MCF 10A (cell line): ENCODE measurements at regions of chr14 and their contacts with region 1.

Region 1: DNA sequence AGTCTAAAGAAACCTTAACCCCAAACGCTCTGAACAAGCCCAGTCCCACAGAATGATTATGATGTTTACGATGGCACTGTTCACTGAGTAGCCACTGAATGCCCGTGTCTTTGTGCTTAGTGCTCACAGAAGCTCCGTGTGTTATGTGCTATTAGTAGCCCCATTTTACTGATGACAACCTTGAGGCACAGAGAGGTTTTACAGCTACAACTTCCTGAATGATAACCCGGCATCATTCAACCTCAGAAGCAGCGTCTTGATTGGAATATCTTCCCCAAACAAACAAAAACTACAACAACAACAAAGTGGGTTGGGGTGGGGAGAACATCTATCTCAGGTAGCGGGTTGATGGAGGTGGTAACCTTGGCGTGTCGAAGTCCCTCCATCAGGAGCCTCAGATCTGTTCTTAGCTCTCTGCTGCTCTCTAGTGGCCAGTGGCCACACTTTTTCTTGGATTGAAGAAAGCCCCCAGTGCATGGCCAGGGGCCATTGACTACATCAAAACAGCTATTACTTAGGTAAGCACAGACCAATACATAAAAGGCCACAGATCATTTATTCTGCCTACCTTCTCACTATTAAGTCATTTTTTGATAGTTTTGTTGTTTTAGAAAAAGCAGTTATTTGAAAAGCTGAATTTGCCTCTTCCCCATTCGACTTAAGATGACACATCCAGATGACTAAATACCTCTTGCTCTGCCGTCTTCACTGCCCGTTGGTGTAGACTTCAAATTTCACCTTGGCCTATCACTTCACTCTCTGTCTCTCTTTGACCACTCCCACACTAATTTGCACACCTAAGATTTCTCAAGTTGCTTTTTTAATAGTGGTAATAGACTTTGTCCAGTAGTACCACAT is 376.9 kb downstream of the GALC start:
- DNase-seq: peak; percentile 73
- H3K4me3 Mint-ChIP-seq: no peak overlapping the region
- H3K27ac Mint-ChIP-seq: no peak overlapping the region
- H3K4me1 Mint-ChIP-seq: peaks cover 6% of the 10 kb centered on the region
- H3K27me3 Mint-ChIP-seq: no peaks in the 10 kb centered on the region
- CTCF ChIP-seq: peak; percentile 86

Region 2: GRCh38 chr14:86915406-86915805 is 700.6 kb before region 1 on chr14:
- CTCF ChIA-PET with region 1: interaction called, 3 read pairs
- POLR2A ChIA-PET with region 1: no interaction called
- intact Hi-C with region 1: loop called (anchors 10 kb)
- DNase-seq: peak; percentile 10
- H3K4me3 Mint-ChIP-seq: no peak overlapping the region
- H3K27ac Mint-ChIP-seq: peak overlapping the region; percentile 23
- H3K4me1 Mint-ChIP-seq: peaks cover 12% of the 10 kb centered on the region
- H3K27me3 Mint-ChIP-seq: no peaks in the 10 kb centered on the region
- CTCF ChIP-seq: no peak

Region 3: DNA sequence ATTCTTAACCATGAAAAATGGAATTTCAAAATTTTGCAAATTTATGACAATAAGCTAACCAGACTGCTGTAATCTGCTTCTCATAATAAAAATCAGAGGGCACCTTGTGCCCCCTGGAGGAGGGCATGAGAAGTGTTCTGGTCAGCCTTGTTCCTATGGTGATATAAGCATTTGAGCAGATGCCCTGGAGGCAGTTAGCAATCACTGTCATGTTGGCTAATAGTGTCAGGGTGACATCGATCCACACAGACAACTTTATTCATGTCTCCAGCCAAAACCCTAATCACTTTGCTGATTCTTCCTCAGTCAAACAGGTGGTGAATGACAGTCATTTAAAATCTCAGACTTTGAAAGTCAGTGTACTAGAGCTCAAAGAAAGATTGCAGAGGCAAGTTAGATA is 566.1 kb before region 1 on chr14:
- CTCF ChIA-PET with region 1: interaction called, 14 read pairs
- POLR2A ChIA-PET with region 1: no interaction called
- intact Hi-C with region 1: no loop called
- DNase-seq: peak; percentile 81
- H3K4me3 Mint-ChIP-seq: no peak overlapping the region
- H3K27ac Mint-ChIP-seq: no peak overlapping the region
- H3K4me1 Mint-ChIP-seq: peaks cover 5% of the 10 kb centered on the region
- H3K27me3 Mint-ChIP-seq: no peaks in the 10 kb centered on the region
- CTCF ChIP-seq: peak; percentile 61

Region 4: GRCh38 chr14:87066221-87066817 is 549.7 kb before region 1 on chr14:
- CTCF ChIA-PET with region 1: interaction called, 9 read pairs
- POLR2A ChIA-PET with region 1: no interaction called
- intact Hi-C with region 1: loop called (anchors 10 kb)
- DNase-seq: peak; percentile 36
- H3K4me3 Mint-ChIP-seq: no peak overlapping the region
- H3K27ac Mint-ChIP-seq: no peak overlapping the region
- H3K4me1 Mint-ChIP-seq: peaks cover 14% of the 10 kb centered on the region
- H3K27me3 Mint-ChIP-seq: no peaks in the 10 kb centered on the region
- CTCF ChIP-seq: peak; percentile 42

Region 5: DNA sequence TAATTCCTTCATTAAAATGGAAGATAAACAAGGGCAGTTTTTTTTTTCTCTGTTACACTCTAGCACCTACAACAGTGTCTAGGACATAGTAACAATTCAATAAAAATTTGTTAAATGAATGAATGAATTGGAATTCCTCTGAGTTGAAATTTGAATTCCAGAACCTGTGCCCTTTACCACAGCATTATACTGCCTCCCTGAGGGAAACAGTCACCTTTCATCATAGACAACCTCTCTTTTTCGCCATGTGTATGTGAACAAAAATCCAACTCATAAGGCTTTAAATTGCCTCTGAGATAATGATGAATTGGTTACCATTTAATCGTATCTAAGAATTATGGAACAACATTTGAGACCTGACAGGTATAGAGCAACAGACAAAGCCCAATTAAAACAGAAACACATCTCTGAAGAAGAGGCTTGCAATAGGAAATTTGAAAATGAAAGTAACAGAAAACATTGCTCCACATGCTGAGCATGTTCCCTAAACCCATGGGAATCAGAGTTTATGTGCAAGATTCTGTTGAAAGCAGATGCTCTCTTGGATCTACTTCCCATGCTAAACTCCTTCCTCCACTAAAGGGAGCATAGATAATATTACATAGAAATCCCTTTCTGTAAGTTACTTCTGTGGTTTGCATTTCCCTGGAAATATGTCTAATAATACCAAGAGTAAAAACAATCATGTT is 280.9 kb before region 1 on chr14:
- CTCF ChIA-PET with region 1: interaction called, 8 read pairs
- POLR2A ChIA-PET with region 1: no interaction called
- intact Hi-C with region 1: loop called (anchors 10 kb)
- DNase-seq: peak; percentile 40
- H3K4me3 Mint-ChIP-seq: peak overlapping the region; percentile 66
- H3K27ac Mint-ChIP-seq: no peak overlapping the region
- H3K4me1 Mint-ChIP-seq: peaks cover 14% of the 10 kb centered on the region
- H3K27me3 Mint-ChIP-seq: no peaks in the 10 kb centered on the region
- CTCF ChIP-seq: peak; percentile 28

Region 6: DNA sequence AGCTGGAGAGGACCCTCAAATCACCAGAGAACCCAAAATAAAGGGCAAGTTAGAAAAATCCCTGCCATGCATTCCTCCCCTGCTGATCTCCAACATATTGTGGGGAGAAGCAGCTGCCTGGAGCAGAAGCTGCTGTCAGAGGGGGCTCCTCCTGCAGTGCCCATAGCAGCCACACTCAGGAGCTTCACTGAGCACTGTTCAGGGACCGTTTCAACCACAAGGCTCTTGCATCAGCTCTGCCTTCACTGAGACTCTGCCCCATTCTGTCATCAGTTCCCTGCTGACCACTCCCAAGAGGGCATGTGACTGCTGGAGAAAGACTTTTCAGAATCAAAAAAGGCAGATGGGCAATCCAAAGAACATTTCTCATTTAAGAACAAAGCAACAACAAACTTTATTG is 15.8 kb before region 1 on chr14:
- CTCF ChIA-PET with region 1: interaction called, 12 read pairs
- POLR2A ChIA-PET with region 1: no interaction called
- intact Hi-C with region 1: no loop called
- DNase-seq: no peak
- H3K4me3 Mint-ChIP-seq: no peak overlapping the region
- H3K27ac Mint-ChIP-seq: no peak overlapping the region
- H3K4me1 Mint-ChIP-seq: no peaks in the 10 kb centered on the region
- H3K27me3 Mint-ChIP-seq: no peaks in the 10 kb centered on the region
- CTCF ChIP-seq: no peak

Region 7: DNA sequence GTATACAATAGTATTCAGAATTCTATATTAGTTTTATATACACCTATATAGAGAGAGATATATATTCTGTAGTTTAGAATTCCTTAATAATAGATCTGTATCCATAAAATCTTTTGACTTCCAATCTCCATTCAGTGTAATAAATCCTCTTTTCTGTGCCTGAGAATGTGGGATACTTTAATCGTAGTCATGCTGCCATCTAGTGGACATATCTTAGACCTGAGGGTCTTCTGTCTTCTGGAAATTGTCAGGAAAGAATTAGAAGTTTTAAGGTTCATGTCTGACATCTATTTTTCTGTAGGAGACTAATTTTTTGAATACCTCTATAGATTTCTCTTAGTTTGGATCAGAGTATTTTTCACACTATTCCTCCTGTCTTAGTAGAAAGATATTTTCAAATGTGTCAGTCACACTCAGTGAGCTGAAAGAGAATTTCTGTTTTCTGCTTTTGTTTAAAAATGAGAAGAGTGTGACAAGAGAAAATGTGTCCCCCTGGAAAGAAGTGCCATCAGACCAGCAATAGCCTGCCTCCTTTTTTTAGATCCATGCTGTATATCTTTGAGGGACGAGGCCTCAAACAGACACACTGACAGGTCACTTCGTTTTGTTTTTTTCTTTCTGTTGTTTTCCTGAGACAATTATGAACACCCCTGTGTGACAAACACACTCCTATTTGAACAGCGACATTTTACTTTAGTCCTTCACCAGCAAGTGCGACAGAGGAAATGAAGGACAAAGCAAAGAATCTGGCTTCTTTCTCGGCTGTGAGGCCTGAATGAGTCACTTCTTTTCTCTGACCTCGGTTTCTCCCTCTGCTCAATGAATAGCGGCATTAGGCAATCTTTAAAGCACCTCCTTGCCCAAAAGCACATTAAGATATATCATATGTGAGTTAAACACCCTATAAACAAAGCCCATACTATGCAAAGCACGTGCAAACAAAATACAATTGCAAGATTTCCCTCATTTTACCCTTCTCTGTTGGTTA is 280.6 kb after region 1 on chr14:
- CTCF ChIA-PET with region 1: interaction called, 10 read pairs
- POLR2A ChIA-PET with region 1: no interaction called
- intact Hi-C with region 1: loop called (anchors 1 kb)
- DNase-seq: peak; percentile 73
- H3K4me3 Mint-ChIP-seq: no peak overlapping the region
- H3K27ac Mint-ChIP-seq: peak overlapping the region; percentile 32
- H3K4me1 Mint-ChIP-seq: peaks cover 8% of the 10 kb centered on the region
- H3K27me3 Mint-ChIP-seq: no peaks in the 10 kb centered on the region
- CTCF ChIP-seq: peak; percentile 62